Activated CD4-positive, alpha-beta T cell treated with anti-CD3 and anti-CD28 coated beads for 36 hours (primary cell): ENCODE measurements at regions of chr11 and their contacts with region 1.

Region 1: GRCh38 chr11:60831143-60831500 is 10.8 kb upstream of the CCDC86 start:
- DNase-seq: peak; percentile 90
- ATAC-seq: peak; percentile 95
- H3K4me3 Mint-ChIP-seq: no peak overlapping the region
- H3K27ac Mint-ChIP-seq: no peak overlapping the region
- H3K4me1 Mint-ChIP-seq: peaks cover 8% of the 10 kb centered on the region
- H3K27me3 Mint-ChIP-seq: peaks cover 6% of the 10 kb centered on the region

Region 2: DNA sequence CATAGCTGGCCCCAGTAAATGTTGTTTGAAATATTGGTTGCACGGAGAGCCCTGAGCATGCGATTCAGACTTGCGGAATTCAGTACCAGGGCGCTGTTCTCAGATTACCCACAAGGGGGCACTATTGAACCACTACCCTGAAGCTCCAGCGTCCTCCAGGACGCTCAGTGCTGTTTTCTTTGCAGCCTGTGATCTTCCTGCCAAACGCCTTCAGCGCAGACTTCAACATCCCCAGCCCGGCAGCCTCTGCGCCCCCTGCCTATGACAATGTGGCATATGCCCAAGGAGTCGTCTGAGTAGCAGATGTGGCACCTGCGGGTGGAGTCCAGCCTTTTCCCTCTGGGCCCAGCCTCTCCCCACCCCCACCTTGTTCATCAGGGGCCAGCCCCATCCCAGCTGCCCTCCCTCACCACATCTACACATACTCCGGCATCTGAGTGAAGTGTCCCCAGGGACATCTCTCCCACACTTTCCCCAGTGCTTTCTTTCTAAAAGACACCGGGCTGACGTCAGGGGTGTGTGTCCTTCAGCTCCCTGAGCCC is 55.6 kb before region 1 on chr11:
- CTCF ChIA-PET with region 1: interaction called, 19 read pairs
- POLR2A ChIA-PET with region 1: no interaction called
- intact Hi-C with region 1: loop called (anchors 1 to 5 kb)
- DNase-seq: peak; percentile 91
- ATAC-seq: peak; percentile 98
- H3K4me3 Mint-ChIP-seq: no peak overlapping the region
- H3K27ac Mint-ChIP-seq: no peak overlapping the region
- H3K4me1 Mint-ChIP-seq: peaks cover 7% of the 10 kb centered on the region
- H3K27me3 Mint-ChIP-seq: no peaks in the 10 kb centered on the region

Region 3: DNA sequence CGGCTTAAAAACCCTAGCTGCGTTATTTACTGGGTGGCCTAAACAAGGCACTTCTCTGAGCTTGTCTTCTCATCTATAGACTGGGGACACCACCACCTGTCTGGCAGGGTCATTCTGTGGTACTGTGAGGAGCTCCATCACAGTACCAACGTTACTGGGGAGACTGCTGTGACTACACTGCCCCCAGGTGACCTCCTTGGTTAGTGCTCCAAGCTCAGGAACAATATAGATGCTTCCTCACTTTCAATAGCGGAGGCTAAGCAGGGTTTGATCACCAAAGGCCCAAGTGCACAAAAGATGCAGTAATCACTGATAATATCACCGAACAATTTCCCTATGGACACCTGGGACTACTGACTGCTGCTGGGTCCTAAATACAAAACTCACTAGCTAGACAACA is 56.4 kb after region 1 on chr11:
- CTCF ChIA-PET with region 1: interaction called, 74 read pairs
- POLR2A ChIA-PET with region 1: no interaction called
- intact Hi-C with region 1: loop called (anchors 1 kb)
- DNase-seq: peak; percentile 60
- ATAC-seq: peak; percentile 90
- H3K4me3 Mint-ChIP-seq: no peak overlapping the region
- H3K27ac Mint-ChIP-seq: no peak overlapping the region
- H3K4me1 Mint-ChIP-seq: no peaks in the 10 kb centered on the region
- H3K27me3 Mint-ChIP-seq: no peaks in the 10 kb centered on the region

Region 4: GRCh38 chr11:60906132-60906972 is 75.2 kb after region 1 on chr11 and contains the start of gene PRPF19:
- CTCF ChIA-PET with region 1: interaction called, 16 read pairs
- POLR2A ChIA-PET with region 1: no interaction called
- intact Hi-C with region 1: no loop called
- DNase-seq: peak; percentile 99
- ATAC-seq: peak; percentile 97
- H3K4me3 Mint-ChIP-seq: peak within 1 kb of the TSS; percentile 86
- H3K27ac Mint-ChIP-seq: peak within 1 kb of the TSS; percentile 94
- H3K4me1 Mint-ChIP-seq: peaks cover 41% of the 10 kb centered on the region
- H3K27me3 Mint-ChIP-seq: no peaks in the 10 kb centered on the region
- total RNA-seq, gene PRPF19: 148 to 197 TPM

Region 5: DNA sequence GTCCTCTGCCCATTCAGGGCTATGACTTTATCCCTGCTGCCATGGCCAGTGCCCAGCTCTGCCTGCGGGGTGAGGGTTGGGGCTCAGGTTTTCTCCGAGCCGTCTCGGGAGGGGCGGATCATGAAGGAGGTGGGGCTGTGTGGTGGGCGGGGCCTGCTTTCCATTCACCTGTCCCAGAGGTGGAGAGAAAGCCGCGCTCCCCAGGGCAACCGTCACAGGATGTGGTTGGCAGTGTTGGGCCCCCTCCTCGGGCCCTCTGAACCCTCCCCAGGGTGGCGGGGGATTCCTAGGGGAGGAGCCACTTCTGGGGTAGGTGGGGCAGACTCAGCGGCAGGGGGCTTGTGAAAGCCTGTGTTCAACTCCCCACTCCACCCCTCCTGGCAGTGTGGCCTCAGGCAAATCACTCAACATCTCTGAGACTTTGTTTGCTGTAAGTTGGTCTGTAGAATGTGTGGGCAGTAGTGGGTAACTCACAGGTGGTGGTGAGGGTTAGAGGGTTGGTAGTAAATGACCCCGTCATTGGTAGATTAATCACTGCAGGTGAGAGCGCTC is 190.6 kb after region 1 on chr11:
- CTCF ChIA-PET with region 1: no interaction called
- POLR2A ChIA-PET with region 1: no interaction called
- intact Hi-C with region 1: no loop called
- DNase-seq: peak; percentile 94
- ATAC-seq: peak; percentile 50
- H3K4me3 Mint-ChIP-seq: peak overlapping the region; percentile 79
- H3K27ac Mint-ChIP-seq: peak overlapping the region; percentile 97
- H3K4me1 Mint-ChIP-seq: peaks cover 92% of the 10 kb centered on the region
- H3K27me3 Mint-ChIP-seq: no peaks in the 10 kb centered on the region

Region 6: DNA sequence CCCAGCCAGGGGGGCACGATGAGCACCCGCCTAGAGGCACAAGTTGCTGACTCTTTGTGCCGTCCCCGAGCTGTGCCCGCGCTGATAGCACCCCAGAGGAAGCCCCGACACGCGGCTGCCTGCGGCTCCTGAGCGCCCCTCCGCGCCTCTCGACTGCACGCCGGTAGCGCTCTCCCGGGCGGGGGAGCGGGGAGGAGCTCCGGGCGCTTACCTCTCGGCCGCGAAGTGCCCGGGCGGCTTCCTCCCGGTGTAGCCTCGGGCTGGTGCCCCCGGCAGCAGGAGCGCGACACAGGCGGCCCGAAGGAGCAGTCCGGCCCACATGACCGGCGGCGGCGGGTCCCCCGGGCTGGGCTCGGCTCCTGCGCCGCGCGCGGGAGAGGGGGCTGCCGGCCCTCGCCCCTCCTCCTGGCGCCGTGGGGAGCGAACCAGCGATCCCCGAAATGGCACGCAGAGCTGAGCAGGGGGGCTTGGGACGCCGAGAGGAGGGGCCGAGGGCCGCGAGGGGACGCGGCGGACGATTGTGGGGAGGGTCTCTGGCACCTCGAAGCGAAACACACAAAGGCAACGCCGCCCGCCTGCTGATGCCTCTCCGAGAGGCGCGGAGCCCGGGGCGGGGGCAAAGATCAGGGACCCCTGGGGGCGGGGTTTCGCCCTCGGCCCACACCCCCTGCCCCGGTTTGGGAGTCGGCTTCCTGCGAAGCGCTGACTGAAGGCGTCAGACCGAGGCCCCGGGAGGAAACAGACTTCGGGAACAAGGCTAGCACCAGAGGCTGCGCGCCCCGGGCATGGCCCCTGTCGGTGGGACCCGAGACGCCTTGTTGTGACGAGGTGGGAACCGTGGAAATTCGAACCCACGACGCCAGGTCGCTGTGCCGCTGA is 463.8 kb after region 1 on chr11 and contains the start of gene VWCE:
- CTCF ChIA-PET with region 1: interaction called, 6 read pairs
- POLR2A ChIA-PET with region 1: no interaction called
- intact Hi-C with region 1: loop called (anchors 5 to 10 kb)
- DNase-seq: peak; percentile 89
- ATAC-seq: peak; percentile 90
- H3K4me3 Mint-ChIP-seq: peak within 1 kb of the TSS; percentile 80
- H3K27ac Mint-ChIP-seq: peak within 1 kb of the TSS; percentile 72
- H3K4me1 Mint-ChIP-seq: peaks cover 33% of the 10 kb centered on the region
- H3K27me3 Mint-ChIP-seq: peaks cover 14% of the 10 kb centered on the region
- total RNA-seq, gene VWCE: 5.2 to 6.8 TPM